Activated T-helper 2 cell treated with anti-CD3 and anti-CD28 coated beads, Interferon-gamma antibody, Interleukin-2, Interleukin-4, amounts not matched to agents 10 μg/mL and 5 μg/mL and 100 μg/mL, durations not matched to agents 14 hours and 24 hours and 36 hours (primary cell): ENCODE measurements at regions of chr2 and their contacts with region 1.

Region 1: DNA sequence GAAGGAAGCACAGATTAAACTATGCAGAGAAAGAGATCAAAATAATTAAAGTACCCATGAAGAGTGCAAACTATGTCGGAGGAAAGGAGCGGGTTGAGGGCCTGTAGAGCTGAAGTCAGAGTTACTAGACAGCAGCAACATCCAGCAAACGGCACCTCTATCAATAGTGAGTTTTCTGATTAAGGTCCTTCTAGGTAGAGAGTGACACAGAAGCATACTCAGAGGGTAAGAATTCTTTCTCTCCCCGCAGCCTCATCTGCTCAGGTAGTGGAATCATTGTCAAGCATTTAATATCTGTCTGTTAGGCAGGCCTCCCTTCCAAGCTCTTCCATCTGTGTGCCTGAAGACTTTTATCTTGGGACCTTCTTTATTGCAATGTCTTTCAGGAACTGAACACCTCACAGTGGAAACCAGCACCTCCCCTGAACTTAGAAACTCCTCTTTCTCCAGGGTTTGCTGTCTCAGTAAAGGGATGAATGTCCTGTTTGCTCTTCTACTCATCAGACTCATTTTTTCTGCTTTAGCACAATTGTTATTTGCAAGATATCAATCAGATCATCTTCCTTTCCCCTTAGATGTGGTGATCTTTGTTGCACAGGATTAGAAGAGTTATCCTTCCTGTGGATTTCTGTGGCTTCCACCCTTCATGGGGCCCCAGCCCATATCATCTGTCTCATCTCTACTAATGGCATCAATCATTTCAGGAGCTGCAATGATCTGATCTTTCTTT is 28.8 kb downstream of the SP140 start:
- DNase-seq: peak; percentile 54
- H3K4me3 Mint-ChIP-seq: no peak overlapping the region
- H3K27ac Mint-ChIP-seq: no peak overlapping the region
- H3K4me1 Mint-ChIP-seq: peaks cover 17% of the 10 kb centered on the region
- H3K27me3 Mint-ChIP-seq: no peaks in the 10 kb centered on the region

Region 2: DNA sequence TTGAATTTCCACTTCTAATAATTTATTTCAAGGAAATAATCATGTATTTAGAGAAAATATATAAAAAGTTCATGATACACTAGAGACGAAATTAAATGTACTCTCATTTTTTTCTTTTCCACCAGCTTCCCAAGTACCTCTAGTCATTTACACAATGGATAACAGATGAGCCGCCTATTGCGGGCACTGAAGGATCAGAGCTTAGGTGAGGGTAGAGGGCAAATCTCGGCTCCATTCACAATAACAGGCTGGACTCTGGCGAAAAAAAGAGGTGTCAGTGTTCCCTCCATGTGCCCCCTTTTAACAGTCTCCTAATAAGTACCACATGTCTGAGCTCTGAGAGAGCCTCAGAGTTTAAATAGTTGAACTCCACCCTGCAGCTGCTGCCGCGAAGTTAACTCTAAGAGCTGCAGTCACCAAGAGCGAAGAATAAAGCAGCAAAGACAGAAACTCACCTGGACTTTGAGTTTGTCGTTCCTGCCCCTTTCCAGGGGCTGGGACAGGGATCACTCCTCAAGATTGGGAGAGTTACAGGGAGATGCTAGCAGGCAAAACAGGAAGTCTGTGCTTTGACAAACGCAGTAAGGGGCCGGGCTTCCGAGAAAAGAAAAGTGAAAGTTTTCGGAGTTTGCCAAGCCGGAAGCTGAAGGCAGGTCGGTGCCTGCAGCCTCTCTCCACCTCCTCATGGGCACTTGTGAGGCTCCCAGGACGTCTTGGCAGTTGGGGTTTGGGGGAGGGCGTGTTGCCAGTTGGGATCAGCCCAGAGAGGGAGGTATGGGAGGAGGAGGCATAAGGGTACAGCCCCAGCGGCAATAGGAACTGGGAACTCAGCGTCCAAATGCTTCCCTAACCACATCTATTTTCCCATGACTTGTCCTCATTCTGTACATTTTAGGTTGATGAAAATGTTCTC is 34.6 kb before region 1 on chr2 and contains the start of gene SP110:
- intact Hi-C with region 1: loop called (anchors 5 kb)
- DNase-seq: peak; percentile 80
- H3K4me3 Mint-ChIP-seq: peak within 1 kb of the TSS; percentile 97
- H3K27ac Mint-ChIP-seq: peak within 1 kb of the TSS; percentile 89
- H3K4me1 Mint-ChIP-seq: peaks cover 63% of the 10 kb centered on the region
- H3K27me3 Mint-ChIP-seq: no peaks in the 10 kb centered on the region
- total RNA-seq, gene SP110: 114 and 121 TPM in 2 replicates

Region 3: DNA sequence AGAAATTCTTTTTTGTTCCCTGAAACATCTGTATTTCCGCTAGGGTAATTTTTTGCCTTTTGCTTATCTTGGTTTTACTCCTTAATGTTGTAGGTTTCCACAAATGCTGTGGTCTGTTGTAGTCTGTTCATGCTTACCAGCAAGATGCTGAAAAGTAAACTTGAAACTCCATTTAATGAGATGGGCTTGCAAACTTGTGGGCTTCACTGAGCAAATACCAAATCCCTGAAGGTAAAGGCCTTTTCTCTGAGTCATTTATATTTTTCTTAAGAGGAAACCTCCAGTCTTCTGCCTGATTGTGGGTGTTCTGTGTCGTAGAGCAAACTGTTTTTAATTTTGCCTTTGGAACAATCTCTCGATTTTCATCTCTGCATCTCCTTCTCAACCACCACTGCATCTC is 19.5 kb before region 1 on chr2:
- intact Hi-C with region 1: loop called (anchors 1 kb)
- DNase-seq: no peak
- H3K4me3 Mint-ChIP-seq: peak overlapping the region; percentile 73
- H3K27ac Mint-ChIP-seq: peak overlapping the region; percentile 98
- H3K4me1 Mint-ChIP-seq: peaks cover 55% of the 10 kb centered on the region
- H3K27me3 Mint-ChIP-seq: no peaks in the 10 kb centered on the region

Region 4: DNA sequence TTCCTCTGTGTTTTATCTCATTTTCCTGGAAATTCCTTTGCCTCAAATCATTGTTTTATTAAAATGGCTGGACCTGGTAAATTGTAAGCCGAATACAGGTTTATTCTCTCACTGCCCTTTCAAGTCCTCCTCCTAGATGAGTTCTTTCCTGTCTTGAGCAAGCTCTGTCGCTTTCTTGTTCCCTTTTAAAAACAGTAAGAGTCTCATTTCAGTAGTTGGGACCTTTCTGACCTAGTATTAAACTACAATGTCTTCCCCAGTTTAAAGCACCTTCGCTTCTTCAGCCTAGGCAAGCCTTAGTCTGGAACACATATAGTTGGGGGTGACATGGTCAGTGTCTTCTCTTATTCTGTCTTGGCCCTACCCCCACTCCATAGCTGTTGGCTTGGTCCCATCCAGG is 31.7 kb after region 1 on chr2:
- intact Hi-C with region 1: loop called (anchors 1 kb)
- DNase-seq: no peak
- H3K4me3 Mint-ChIP-seq: no peak overlapping the region
- H3K27ac Mint-ChIP-seq: peak overlapping the region; percentile 4
- H3K4me1 Mint-ChIP-seq: peaks cover 34% of the 10 kb centered on the region
- H3K27me3 Mint-ChIP-seq: no peaks in the 10 kb centered on the region

Region 5: DNA sequence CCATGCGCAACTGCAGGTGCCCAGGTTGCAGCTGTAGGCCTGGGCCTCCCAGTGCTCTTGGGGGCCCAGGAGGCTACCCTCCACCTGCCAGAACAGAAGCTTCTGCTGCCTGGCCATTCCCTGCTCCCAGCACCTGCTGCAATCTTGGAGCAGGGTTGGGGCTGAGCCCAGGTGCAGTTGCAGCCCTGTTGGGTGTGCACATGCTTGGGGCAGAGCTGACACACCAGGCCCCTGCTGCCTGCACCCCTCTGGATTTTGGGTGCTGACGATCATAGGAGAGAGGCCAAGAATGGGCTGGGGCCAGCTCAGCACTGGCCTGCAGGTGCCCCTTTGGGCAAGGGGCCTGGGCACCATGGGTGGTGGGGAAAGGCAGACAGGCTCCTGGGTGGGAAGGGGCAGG is 52.2 kb after region 1 on chr2:
- intact Hi-C with region 1: no loop called
- DNase-seq: no peak
- H3K4me3 Mint-ChIP-seq: no peak overlapping the region
- H3K27ac Mint-ChIP-seq: no peak overlapping the region
- H3K4me1 Mint-ChIP-seq: peaks cover 5% of the 10 kb centered on the region
- H3K27me3 Mint-ChIP-seq: no peaks in the 10 kb centered on the region

Region 6: DNA sequence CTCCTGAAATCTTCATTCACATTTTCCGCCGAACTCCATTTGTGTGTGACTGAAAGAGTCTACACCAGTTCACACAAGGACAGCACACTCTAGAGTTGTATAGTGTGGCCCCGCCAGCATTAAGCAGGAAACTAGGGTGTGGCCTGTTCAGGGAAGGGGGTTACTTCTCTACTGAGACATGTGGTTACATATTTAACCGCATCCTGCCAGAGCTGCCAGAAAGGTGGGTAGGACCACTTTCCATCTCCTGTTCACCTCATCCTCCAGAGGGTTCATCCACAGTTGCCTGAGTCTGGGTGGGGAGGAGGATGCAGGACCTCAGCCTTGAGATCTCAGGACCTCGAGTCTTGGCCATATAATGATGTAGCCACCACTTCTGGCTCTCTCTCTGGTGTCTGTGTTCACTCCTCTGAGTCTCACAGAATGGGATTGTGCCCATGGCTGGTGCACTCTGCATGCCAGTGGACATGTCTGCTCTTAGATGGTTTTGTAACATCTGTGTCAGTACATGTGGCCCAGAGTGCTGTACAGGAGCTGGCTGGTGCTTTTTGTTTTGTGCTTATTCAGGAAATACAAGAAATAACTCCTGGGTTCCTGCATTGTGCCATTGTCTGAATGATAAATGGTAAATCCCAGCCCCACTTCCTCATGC is 65.0 kb after region 1 on chr2:
- intact Hi-C with region 1: loop called (anchors 2 kb)
- DNase-seq: peak; percentile 79
- H3K4me3 Mint-ChIP-seq: peak overlapping the region; percentile 61
- H3K27ac Mint-ChIP-seq: peak overlapping the region; percentile 94
- H3K4me1 Mint-ChIP-seq: peaks cover 60% of the 10 kb centered on the region
- H3K27me3 Mint-ChIP-seq: no peaks in the 10 kb centered on the region

Region 7: DNA sequence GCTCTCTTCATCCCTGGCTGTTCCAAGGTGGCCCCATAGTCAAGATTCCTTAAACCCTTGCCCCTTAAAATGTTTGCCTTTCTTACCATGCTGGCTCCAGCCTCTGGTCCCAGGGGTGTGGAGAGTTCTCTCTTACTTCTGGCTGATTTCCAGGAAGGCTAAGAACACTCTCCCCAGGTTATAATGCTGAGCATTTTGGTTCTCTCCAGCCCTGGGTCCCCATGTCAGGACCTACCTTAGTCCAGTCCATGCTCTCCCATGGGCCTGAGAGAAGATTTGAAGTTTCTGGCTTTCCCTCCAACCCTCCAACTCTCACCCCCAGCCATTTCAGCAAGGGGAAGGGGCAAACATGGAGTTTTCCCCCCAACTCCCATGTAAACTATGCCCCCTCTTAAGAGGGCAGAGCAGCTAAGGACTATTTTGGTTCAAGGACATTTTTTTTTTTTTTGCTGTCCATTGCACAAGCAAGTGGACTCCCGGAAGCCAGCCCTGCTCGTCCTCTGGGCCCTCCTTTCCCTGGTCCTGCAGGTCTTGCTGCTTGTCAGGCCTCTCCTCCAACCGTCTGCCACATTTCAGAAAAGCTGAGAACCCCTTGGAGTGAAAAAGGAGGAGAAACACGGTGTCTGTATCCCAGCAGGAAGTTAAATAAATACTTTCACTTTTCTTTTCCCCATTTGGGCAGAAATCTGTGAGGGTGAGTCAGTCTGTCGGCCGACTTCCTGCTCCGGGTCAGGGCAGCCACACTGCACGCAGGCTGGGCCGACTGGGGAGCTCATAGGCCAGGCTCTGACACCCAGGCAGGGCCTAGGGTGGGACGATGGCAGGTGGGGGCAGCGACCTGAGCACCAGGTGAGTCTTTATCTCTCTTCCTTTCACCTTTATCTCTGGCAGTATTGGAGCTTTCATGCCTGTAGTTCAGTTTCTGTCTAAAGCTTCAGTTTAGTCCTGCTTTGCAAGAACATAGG is 72.4 kb after region 1 on chr2 and contains the start of gene SP140L:
- intact Hi-C with region 1: loop called (anchors 1 kb)
- DNase-seq: peak; percentile 76
- H3K4me3 Mint-ChIP-seq: peak within 1 kb of the TSS; percentile 91
- H3K27ac Mint-ChIP-seq: peak within 1 kb of the TSS; percentile 92
- H3K4me1 Mint-ChIP-seq: peaks cover 67% of the 10 kb centered on the region
- H3K27me3 Mint-ChIP-seq: no peaks in the 10 kb centered on the region
- total RNA-seq, gene SP140L: 55.7 and 59.1 TPM in 2 replicates

Region 8: DNA sequence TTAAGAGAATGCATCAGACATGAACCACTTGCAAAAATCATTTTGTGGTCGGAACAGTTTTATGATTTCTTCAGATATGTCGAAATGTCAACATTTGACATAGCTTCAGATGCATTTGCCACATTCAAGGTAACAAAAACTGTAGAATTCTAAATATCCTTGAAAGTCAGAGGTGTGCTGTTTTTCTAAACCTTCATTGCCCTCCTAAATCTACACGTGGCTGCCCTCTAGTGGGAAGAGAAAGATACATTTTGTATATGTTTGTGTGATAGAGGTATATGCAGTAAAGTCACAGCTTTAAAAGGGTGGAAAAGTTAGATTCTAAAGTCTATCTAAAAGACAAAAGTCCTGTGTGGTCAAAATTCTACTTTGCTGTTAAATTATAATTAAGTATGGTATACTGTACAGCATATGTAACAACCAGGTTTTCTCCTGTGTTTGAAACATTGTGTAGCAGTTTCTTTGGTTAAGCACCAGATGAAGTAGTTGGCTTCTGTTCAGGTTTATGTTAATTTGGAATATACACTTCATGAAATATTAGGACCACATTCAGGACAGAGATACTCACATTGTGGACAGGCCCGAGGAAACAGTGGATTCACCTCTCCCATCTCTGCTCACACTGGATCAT is 544.6 kb after region 1 on chr2:
- intact Hi-C with region 1: loop called (anchors 10 kb)
- DNase-seq: no peak
- H3K4me3 Mint-ChIP-seq: no peak overlapping the region
- H3K27ac Mint-ChIP-seq: peak overlapping the region; percentile 50
- H3K4me1 Mint-ChIP-seq: peaks cover 20% of the 10 kb centered on the region
- H3K27me3 Mint-ChIP-seq: no peaks in the 10 kb centered on the region